ENCODE measurements at regions of chr3 and their contacts with region 1.

Region 1: GRCh38 chr3:197256836-197257444 is 41.5 kb downstream of the DLG1 start:
- DNase-seq: peak; percentile 31 to 56
- H3K4me3 ChIP-seq: no peak overlapping the region
- H3K27ac ChIP-seq: peak overlapping the region; percentile 53
- H3K4me1 ChIP-seq: 0 out of 2 replicates have a peak, but pooled peaks cover 8% of the 10 kb centered on the region
- H3K27me3 ChIP-seq: no peaks in the 10 kb centered on the region
- CTCF ChIP-seq: peak; percentile 94

Region 2: DNA sequence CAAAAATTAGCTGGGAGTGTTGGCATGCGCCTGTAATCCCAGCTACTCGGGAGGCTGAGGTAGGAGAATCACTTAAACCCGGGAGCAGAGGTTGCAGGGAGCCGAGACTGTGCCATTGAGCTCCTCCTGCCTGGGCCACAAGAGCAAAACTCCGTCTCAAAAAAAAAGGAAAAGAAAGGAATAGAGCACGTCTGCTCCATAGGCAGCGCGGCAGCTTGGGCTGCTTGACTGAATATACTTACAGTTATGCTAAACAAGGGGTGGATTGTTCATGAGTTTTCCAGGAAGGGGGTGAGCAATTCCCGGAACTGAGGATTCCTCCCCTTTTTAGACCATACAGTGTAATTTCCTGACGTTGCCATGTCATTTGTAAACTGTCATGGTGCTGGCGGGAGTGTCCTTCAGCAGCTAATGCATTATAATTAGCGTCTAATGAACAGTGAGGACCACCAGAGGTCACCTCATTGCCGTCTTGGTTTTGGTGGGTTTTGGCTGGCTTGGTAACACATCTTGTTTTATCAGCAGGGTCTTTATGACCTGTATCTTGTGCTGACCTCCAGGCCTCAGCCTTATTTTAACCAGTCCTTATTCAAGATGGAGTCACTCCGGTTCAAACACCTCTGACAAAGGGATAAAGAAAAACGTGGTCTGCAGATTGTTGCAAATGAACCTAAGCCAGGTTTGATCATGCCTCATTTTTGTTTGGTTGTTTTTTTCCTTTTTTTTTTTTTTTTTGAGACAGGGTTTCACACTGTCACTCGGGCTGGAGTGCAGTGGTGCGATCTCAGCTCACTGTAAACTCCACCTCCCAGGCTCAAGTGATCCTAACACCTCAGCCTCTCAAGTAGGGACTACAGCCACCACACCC is 414.1 kb before region 1 on chr3:
- CTCF ChIA-PET with region 1: no interaction called
- POLR2A ChIA-PET with region 1: no interaction called
- intact Hi-C with region 1: no loop called
- DNase-seq: no peak
- H3K4me3 ChIP-seq: no peak overlapping the region
- H3K27ac ChIP-seq: no peak overlapping the region
- H3K4me1 ChIP-seq: peaks cover 10% of the 10 kb centered on the region
- H3K27me3 ChIP-seq: no peaks in the 10 kb centered on the region
- CTCF ChIP-seq: no peak

Region 3: DNA sequence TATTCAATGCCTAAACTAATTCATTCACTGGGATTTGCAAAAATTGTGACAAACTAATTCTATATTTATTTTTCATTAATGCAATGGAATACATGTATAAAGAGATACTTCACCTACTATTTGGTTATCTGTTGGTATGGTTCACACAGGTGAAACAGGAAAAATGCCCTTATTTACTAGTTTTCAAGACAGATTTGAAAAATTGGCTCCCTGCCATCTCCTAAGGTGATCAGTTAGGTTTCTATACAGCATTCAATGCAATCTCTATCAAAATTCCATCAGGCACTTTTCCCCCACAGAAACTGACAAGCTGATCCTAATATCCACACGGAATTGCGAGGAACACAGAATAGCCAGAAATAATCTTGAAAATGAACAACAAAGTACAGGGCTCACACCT is 59.6 kb before region 1 on chr3:
- CTCF ChIA-PET with region 1: no interaction called
- POLR2A ChIA-PET with region 1: no interaction called
- intact Hi-C with region 1: no loop called
- DNase-seq: no peak
- H3K4me3 ChIP-seq: no peak overlapping the region
- H3K27ac ChIP-seq: no peak overlapping the region
- H3K4me1 ChIP-seq: no peaks in the 10 kb centered on the region
- H3K27me3 ChIP-seq: no peaks in the 10 kb centered on the region
- CTCF ChIP-seq: no peak

Region 4: DNA sequence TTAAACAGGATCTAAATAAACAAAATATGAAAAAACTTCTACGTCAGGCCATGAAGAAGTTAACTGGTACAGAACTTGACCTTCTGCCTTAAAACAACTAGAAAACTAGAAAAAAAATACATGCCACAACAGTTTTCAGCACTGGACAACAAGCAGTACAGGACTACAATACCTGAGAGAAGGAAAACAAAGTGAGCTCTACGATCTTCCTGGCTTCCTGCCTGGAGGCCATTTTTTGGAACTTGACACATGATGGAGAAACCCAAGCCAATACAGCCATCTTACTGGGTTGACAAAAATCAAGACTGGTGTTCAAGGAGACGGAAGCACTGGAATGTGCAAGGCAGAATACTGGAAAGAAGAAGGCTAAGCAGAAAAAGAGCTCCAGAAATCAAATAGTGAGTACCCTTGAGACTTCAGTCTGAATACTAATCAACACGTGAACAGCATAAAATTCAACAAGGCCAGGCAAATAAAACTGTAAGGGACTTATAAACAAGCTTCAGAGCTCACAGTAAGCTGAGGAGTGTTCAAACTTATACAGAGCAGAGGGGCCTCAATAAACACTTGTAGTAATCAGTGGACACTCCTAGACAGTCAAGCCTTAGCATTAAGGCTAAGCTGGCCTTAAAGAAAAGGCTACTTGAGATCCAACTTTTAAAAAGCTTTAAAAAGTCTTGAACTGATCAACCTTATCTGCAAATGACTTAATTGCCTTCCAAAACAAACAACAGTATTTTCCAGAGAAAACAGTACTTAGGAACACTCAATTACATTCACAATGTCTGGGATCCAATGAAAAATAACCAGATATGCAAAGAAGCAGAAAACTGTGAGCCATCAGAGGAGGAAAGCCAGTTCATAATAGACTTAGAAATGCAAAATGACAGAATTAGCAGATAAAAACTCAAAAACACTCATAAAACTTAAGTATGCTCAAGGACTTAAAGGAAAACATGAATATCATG is 21.7 kb before region 1 on chr3:
- CTCF ChIA-PET with region 1: interaction called, 11 read pairs
- POLR2A ChIA-PET with region 1: no interaction called
- intact Hi-C with region 1: no loop called
- DNase-seq: no peak
- H3K4me3 ChIP-seq: no peak overlapping the region
- H3K27ac ChIP-seq: no peak overlapping the region
- H3K4me1 ChIP-seq: no peaks in the 10 kb centered on the region
- H3K27me3 ChIP-seq: no peaks in the 10 kb centered on the region
- CTCF ChIP-seq: no peak

Region 5: GRCh38 chr3:197268294-197268693 is 11.4 kb after region 1 on chr3:
- CTCF ChIA-PET with region 1: interaction called, 4 read pairs
- POLR2A ChIA-PET with region 1: interaction called, 12 read pairs
- intact Hi-C with region 1: no loop called
- DNase-seq: no peak
- H3K4me3 ChIP-seq: no peak overlapping the region
- H3K27ac ChIP-seq: no peak overlapping the region
- H3K4me1 ChIP-seq: peaks cover 26% of the 10 kb centered on the region
- H3K27me3 ChIP-seq: no peaks in the 10 kb centered on the region
- CTCF ChIP-seq: no peak

Region 6: DNA sequence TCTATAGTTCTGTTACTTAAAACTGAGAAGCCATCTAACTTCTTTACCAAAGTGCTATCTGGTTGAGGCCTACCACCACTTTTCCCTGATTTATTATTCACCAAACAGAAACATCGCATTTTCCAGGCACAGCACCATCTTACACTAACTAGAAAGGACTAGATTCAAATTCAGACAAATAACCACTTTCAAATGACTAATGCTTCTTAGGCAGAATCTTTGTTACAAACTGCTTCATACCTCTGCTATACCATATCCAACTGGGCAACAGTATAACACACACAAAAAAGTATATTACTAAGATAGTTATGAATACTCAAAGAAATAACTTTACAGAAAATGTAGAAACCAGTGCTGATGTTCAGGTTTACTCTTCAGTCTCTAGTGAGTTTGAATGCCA is 24.9 kb after region 1 on chr3:
- CTCF ChIA-PET with region 1: no interaction called
- POLR2A ChIA-PET with region 1: no interaction called
- intact Hi-C with region 1: loop called (anchors 2 kb)
- DNase-seq: no peak
- H3K4me3 ChIP-seq: no peak overlapping the region
- H3K27ac ChIP-seq: no peak overlapping the region
- H3K4me1 ChIP-seq: no peaks in the 10 kb centered on the region
- H3K27me3 ChIP-seq: no peaks in the 10 kb centered on the region
- CTCF ChIP-seq: no peak

Region 7: GRCh38 chr3:197339841-197340520 is 83.0 kb after region 1 on chr3:
- CTCF ChIA-PET with region 1: no interaction called
- POLR2A ChIA-PET with region 1: no interaction called
- intact Hi-C with region 1: no loop called
- DNase-seq: peak; percentile 28 to 62
- H3K4me3 ChIP-seq: no peak overlapping the region
- H3K27ac ChIP-seq: no peak overlapping the region
- H3K4me1 ChIP-seq: peaks cover 44% of the 10 kb centered on the region
- H3K27me3 ChIP-seq: no peaks in the 10 kb centered on the region
- CTCF ChIP-seq: no peak

Region 8: DNA sequence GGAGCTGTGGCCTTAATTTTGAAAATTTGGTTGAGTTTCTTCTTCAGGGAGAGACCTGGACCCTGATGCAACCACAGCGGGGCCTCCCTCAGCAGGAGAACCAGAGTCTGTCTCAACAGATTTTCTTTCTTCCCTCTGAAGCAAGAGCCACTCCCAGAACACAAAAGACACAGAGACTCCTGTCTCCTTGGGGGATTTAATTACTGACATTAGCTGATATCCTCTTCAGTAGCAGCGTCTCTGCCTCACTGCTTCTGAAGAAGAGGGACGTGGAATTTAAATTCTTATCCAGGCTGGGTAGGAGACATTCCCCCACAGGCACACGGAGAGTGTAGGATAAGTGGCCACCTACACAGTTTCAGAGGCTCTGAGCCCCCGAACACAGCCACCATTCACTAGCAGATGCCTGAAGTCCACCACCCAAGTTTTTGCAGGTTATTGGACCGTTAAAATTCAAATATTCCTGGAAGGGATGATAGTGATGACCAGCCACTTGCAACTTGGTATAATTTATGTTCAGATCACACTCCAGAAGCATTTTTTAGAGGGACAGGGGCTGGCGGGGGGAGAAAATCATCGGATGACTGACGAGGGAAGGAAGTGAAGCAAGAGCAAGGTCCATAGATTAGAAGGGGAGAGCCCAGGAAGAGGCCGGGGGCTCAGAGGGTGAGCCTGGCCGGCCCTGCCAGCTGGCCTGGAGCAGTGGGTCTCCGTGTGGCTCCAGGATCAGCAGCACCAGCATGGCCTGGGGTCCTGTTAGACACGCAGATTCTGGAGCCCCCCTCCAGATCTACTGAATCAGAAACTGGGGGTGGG is 189.2 kb after region 1 on chr3:
- CTCF ChIA-PET with region 1: interaction called, 12 read pairs
- POLR2A ChIA-PET with region 1: no interaction called
- intact Hi-C with region 1: no loop called
- DNase-seq: no peak
- H3K4me3 ChIP-seq: no peak overlapping the region
- H3K27ac ChIP-seq: no peak overlapping the region
- H3K4me1 ChIP-seq: no peaks in the 10 kb centered on the region
- H3K27me3 ChIP-seq: no peaks in the 10 kb centered on the region
- CTCF ChIP-seq: no peak

Region 9: GRCh38 chr3:197511130-197511529 is 254.2 kb after region 1 on chr3:
- CTCF ChIA-PET with region 1: interaction called, 11 read pairs
- POLR2A ChIA-PET with region 1: no interaction called
- intact Hi-C with region 1: loop called (anchors 1 kb)
- DNase-seq: no peak
- H3K4me3 ChIP-seq: no peak overlapping the region
- H3K27ac ChIP-seq: no peak overlapping the region
- H3K4me1 ChIP-seq: peaks cover 16% of the 10 kb centered on the region
- H3K27me3 ChIP-seq: no peaks in the 10 kb centered on the region
- CTCF ChIP-seq: no peak